ENCODE measurements at regions of chr1 and their contacts with region 1.

Region 1: DNA sequence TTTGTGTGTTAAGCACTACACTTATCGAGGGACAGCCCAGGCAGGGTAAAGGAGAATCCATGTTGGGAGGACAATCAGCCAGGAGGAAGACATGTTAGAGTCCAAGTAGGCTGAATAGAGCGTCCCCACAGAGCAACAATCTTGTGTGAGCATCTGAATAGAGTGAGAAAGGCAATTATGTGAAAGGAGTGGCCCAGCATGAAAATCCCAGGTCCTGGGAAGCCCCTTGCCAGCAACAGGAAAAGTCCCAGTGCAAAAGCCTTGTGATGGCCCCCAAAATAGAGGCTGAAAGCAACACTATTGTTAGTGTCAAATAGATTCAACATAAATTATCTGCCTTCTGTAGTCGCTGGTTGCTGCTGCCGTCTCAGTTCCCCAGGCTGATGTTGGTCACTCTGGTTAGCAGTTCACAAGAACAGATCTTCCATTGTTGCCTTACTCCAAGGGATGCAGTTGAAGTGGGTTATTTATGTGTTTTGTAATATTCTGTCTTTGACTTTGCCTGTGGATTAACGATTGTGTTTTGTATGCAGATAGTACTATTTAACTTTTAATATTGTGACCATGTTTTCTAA is 12.1 kb upstream of the ABL2 start:
- DNase-seq: no peak
- ATAC-seq: peak; percentile 65
- H3K4me3 ChIP-seq: no peak overlapping the region
- H3K27ac ChIP-seq: no peak overlapping the region
- H3K4me1 ChIP-seq: no peaks in the 10 kb centered on the region
- H3K27me3 ChIP-seq: no peaks in the 10 kb centered on the region
- CTCF ChIP-seq: no peak
- EP300 ChIP-seq: no peak; a peak in 1 of 4 replicates
- POLR2A ChIP-seq: no peak
- RAD21 ChIP-seq: no peak

Region 2: DNA sequence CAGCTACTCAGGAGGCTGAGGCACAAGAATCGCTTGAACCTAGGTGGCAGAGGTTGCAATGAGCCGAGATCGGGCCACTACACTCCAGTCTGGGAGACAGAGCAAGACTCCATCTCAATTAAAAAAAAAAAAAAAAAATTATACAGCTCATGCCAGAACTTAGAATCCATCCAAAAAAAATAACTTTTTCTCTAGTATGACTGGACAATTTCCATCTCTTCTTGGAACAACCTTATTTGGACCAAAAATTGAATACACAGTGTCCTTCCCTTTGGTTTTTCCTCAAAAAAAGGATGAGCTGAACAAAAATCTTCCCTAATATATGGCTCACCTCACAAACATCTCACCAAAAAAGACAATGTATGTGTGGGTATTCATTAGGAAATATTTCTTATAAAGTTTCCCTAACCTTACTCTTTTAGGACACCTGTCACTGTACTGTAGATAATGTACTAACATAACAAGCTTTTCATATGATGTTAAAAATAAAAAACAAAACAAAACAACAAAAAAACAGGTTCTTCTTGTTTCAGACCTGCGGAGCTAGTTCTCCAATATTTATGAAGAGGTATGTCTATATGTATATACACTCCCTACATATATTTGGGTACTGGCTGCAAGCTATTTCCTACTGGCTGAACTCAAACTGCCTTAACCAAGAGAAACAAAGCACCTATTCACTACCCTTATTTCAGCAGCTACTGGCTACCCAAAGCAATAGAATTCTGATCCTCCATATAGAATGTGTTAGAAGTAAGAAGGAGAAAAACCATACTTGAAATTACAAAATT is 85.8 kb before region 1 on chr1:
- CTCF ChIA-PET with region 1: no interaction called
- POLR2A ChIA-PET with region 1: interaction called, 10 read pairs
- RAD21 ChIA-PET with region 1: no interaction called
- SMC1A ChIA-PET with region 1: no interaction called
- in situ Hi-C with region 1: no loop called
- intact Hi-C with region 1: no loop called
- DNase-seq: no peak
- ATAC-seq: no peak
- H3K4me3 ChIP-seq: no peak overlapping the region
- H3K27ac ChIP-seq: no peak overlapping the region
- H3K4me1 ChIP-seq: no peaks in the 10 kb centered on the region
- H3K27me3 ChIP-seq: no peaks in the 10 kb centered on the region
- CTCF ChIP-seq: no peak
- EP300 ChIP-seq: no peak
- POLR2A ChIP-seq: no peak
- RAD21 ChIP-seq: no peak

Region 3: DNA sequence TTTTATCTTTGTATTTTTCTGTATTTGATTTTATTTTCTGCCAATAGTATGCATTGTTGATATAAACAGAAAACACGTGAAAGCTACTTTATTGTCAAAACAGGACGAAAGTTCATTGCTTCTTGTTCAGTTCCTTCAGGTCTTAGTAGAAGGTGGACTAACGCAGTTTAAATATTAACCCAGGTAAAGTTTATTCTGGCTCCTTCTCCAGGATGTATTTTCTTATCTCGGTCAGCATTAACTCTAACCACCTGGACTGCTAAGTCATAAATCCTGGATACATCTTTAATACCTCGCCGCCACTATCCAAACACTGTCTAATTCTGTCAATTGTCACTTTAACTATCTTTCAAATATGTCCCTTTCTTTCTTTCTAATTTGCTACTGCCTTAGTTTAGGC is 46.3 kb after region 1 on chr1:
- CTCF ChIA-PET with region 1: no interaction called
- POLR2A ChIA-PET with region 1: no interaction called
- RAD21 ChIA-PET with region 1: no interaction called
- SMC1A ChIA-PET with region 1: no interaction called
- in situ Hi-C with region 1: no loop called
- intact Hi-C with region 1: no loop called
- DNase-seq: no peak
- ATAC-seq: no peak
- H3K4me3 ChIP-seq: no peak overlapping the region
- H3K27ac ChIP-seq: no peak overlapping the region
- H3K4me1 ChIP-seq: no peaks in the 10 kb centered on the region
- H3K27me3 ChIP-seq: 0 out of 4 replicates have a peak, but pooled peaks cover 0 to 2% of the 10 kb centered on the region in 2 experiments
- CTCF ChIP-seq: no peak
- EP300 ChIP-seq: no peak
- POLR2A ChIP-seq: no peak
- RAD21 ChIP-seq: no peak

Measured in GM12878 (cell line).